B cell (primary cell): ENCODE measurements at regions of chr1 and their contacts with region 1.

Region 1: DNA sequence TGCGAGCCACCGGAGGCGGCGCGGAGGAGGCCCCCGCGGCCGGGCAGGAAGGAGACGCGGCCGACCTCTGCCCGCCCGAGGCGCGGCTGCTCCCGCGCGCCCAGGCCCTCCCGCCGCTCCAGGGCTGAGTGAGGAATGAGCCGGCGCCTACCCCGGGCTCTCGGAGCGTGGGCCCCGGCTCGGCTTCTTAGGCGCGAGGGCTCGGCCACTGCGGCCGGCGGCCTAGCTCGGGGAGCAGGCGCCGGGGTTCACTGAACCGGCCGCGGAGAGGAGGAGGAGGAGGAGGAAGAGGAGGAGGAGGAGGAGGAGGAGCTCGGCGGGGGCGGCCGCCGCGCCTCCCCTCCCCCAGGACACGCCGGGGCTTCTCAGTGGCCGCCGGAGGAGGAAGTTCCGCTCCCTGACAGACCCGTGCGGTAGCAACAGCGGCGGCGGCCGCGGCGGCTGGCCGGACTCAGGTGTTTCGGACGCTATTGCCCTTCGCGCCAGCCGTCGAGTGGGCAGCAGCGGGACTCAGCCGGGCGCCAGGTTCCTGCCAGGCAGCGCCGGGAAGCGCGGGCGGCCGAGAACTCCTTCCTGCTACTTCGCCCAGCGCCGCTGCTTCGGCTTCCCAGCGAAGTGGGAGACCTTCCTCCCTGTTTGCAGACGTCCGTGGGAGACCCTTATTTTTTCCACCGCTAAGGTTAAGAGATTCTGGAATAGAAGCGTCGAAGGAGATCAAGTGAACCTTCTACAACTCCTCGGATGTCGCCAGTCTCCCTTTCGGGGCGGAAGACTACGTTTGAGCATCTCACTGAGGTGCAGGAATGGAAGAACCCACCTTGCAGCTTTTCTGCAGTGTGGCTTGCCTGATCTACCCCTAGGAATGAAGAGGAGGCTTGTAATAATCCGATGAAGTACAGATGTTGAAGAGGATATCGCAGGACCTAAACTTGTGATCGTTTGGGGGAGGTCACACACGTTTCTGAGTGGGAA is at the start of gene MAN1A2:
- DNase-seq: peak; percentile 90
- ATAC-seq: peak; percentile 76
- H3K4me3 ChIP-seq: peak within 1 kb of the TSS; percentile 84 to 94 (median 92)
- H3K4me3 Mint-ChIP-seq: peak within 1 kb of the TSS; percentile 96
- H3K27ac ChIP-seq: peak within 1 kb of the TSS; percentile 86 to 88
- H3K27ac Mint-ChIP-seq: peak within 1 kb of the TSS; percentile 98
- H3K4me1 ChIP-seq: peaks cover 34 to 46% of the 10 kb centered on the region in 2 donors
- H3K4me1 Mint-ChIP-seq: peaks cover 63% of the 10 kb centered on the region
- H3K27me3 ChIP-seq: no peaks in the 10 kb centered on the region
- H3K27me3 Mint-ChIP-seq: no peaks in the 10 kb centered on the region
- CTCF ChIP-seq: no peak
- total RNA-seq, gene MAN1A2: 54.0 and 55.6 TPM in 2 replicates

Region 2: GRCh38 chr1:117339866-117340700 is 27.2 kb before region 1 on chr1:
- CTCF ChIA-PET with region 1: no interaction called
- POLR2A ChIA-PET with region 1: no interaction called
- intact Hi-C with region 1: no loop called
- DNase-seq: peak; percentile 31
- ATAC-seq: peak; percentile 45
- H3K4me3 ChIP-seq: no peak overlapping the region
- H3K4me3 Mint-ChIP-seq: no peak overlapping the region
- H3K27ac ChIP-seq: no peak overlapping the region
- H3K27ac Mint-ChIP-seq: no peak overlapping the region
- H3K4me1 ChIP-seq: no peaks in the 10 kb centered on the region
- H3K4me1 Mint-ChIP-seq: peaks cover 3% of the 10 kb centered on the region
- H3K27me3 ChIP-seq: no peaks in the 10 kb centered on the region
- H3K27me3 Mint-ChIP-seq: peaks cover under 1% of the 10 kb centered on the region
- CTCF ChIP-seq: no peak

Region 3: GRCh38 chr1:117416546-117417125 is 49.3 kb after region 1 on chr1:
- CTCF ChIA-PET with region 1: no interaction called
- POLR2A ChIA-PET with region 1: no interaction called
- intact Hi-C with region 1: loop called (anchors 10 kb)
- DNase-seq: no peak
- ATAC-seq: no peak
- H3K4me3 ChIP-seq: no peak overlapping the region
- H3K4me3 Mint-ChIP-seq: no peak overlapping the region
- H3K27ac ChIP-seq: no peak overlapping the region
- H3K27ac Mint-ChIP-seq: no peak overlapping the region
- H3K4me1 ChIP-seq: no peaks in the 10 kb centered on the region
- H3K4me1 Mint-ChIP-seq: peaks cover 2% of the 10 kb centered on the region
- H3K27me3 ChIP-seq: no peaks in the 10 kb centered on the region
- H3K27me3 Mint-ChIP-seq: no peaks in the 10 kb centered on the region
- CTCF ChIP-seq: no peak

Region 4: DNA sequence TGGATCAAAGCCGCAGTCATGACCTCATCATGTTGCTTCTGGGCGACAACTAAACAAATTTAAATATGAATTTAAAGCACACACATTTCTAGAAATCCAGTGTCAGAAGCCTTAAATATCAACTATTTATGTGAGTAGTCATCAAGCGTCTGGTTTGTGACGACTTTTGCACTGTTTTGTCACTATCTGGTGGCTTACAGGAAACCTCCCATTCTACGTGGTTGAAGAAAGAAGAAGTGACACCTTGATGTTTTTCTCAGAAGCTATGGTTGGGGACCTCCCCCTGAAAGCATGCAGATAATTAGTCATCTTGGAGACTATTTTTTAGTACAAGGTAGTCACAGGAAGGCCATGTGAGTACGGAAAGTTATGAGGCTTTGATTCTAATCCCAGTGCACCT is 297.0 kb after region 1 on chr1:
- CTCF ChIA-PET with region 1: no interaction called
- POLR2A ChIA-PET with region 1: no interaction called
- intact Hi-C with region 1: loop called (anchors 2 kb)
- DNase-seq: peak; percentile 92
- ATAC-seq: peak; percentile 87
- H3K4me3 ChIP-seq: peak overlapping the region in 1 of 5 experiments; percentile 37
- H3K4me3 Mint-ChIP-seq: peak overlapping the region; percentile 74
- H3K27ac ChIP-seq: peak overlapping the region; percentile 97 to 99
- H3K27ac Mint-ChIP-seq: peak overlapping the region; percentile 90
- H3K4me1 ChIP-seq: peaks cover 78 to 86% of the 10 kb centered on the region in 2 donors
- H3K4me1 Mint-ChIP-seq: peaks cover 84% of the 10 kb centered on the region
- H3K27me3 ChIP-seq: no peaks in the 10 kb centered on the region
- H3K27me3 Mint-ChIP-seq: no peaks in the 10 kb centered on the region
- CTCF ChIP-seq: no peak